Activated CD4-positive, alpha-beta memory T cell treated with anti-CD3 and anti-CD28 coated beads for 36 hours (primary cell): ENCODE measurements at regions of chr2 and their contacts with region 1.

Region 1: DNA sequence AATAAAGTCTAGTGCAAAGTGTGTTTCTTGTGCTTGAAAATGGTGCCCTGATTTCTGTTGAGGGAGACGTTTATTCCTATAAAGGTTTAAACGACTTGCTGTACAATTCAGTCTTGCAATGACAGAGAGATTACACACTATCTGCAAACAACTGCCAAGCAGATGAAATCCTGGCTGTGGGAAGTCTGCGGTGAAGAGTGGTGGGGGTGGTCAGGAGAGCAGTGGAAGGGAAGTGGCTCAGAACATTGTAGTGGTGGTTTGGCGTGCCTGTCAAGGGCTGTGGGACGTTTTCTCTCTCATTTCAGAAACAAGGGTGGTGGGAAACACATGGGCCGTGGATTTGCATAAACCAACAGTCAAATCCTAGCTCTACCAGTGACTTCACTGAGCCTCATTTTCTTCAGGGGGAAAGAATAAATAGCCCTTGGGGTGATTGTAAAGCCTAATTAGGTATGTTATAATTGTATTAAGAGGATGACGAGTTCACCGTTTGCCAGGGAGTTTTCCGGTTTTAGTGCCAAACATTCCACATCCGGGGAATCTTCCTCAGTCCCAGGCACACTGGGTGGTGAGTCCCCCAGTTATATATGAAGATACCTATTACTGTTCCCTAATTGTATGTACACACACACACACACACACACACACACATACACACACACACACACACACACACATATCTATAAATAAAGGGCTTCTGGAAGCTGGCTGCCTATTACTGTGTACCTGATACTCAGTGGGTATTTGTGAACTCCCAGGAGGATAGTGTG is 115.0 kb downstream of the SPTBN1 start:
- DNase-seq: peak; percentile 93
- H3K4me3 Mint-ChIP-seq: peak overlapping the region; percentile 36
- H3K27ac Mint-ChIP-seq: peak overlapping the region; percentile 96
- H3K4me1 Mint-ChIP-seq: peaks cover 85% of the 10 kb centered on the region
- H3K27me3 Mint-ChIP-seq: no peaks in the 10 kb centered on the region

Region 2: GRCh38 chr2:53786705-53787612 is 784.2 kb before region 1 on chr2 and contains the starts of genes ASB3 and ERLEC1:
- CTCF ChIA-PET with region 1: no interaction called
- POLR2A ChIA-PET with region 1: no interaction called
- intact Hi-C with region 1: loop called (anchors 10 kb)
- DNase-seq: peak; percentile 93
- H3K4me3 Mint-ChIP-seq: peak within 1 kb of the TSS; percentile 98
- H3K27ac Mint-ChIP-seq: peak within 1 kb of the TSS; percentile 94
- H3K4me1 Mint-ChIP-seq: peaks cover 46% of the 10 kb centered on the region
- H3K27me3 Mint-ChIP-seq: no peaks in the 10 kb centered on the region
- total RNA-seq, gene ASB3: 21.1 to 21.9 TPM
- total RNA-seq, gene ERLEC1: 26.7 to 27.0 TPM

Region 3: GRCh38 chr2:54589340-54590215 is 18.5 kb after region 1 on chr2:
- CTCF ChIA-PET with region 1: interaction called, 3 read pairs
- POLR2A ChIA-PET with region 1: interaction called, 7 read pairs
- intact Hi-C with region 1: loop called (anchors 1 kb)
- DNase-seq: peak; percentile 60
- H3K4me3 Mint-ChIP-seq: peak overlapping the region; percentile 48
- H3K27ac Mint-ChIP-seq: peak overlapping the region; percentile 94
- H3K4me1 Mint-ChIP-seq: peaks cover 87% of the 10 kb centered on the region
- H3K27me3 Mint-ChIP-seq: no peaks in the 10 kb centered on the region

Region 4: DNA sequence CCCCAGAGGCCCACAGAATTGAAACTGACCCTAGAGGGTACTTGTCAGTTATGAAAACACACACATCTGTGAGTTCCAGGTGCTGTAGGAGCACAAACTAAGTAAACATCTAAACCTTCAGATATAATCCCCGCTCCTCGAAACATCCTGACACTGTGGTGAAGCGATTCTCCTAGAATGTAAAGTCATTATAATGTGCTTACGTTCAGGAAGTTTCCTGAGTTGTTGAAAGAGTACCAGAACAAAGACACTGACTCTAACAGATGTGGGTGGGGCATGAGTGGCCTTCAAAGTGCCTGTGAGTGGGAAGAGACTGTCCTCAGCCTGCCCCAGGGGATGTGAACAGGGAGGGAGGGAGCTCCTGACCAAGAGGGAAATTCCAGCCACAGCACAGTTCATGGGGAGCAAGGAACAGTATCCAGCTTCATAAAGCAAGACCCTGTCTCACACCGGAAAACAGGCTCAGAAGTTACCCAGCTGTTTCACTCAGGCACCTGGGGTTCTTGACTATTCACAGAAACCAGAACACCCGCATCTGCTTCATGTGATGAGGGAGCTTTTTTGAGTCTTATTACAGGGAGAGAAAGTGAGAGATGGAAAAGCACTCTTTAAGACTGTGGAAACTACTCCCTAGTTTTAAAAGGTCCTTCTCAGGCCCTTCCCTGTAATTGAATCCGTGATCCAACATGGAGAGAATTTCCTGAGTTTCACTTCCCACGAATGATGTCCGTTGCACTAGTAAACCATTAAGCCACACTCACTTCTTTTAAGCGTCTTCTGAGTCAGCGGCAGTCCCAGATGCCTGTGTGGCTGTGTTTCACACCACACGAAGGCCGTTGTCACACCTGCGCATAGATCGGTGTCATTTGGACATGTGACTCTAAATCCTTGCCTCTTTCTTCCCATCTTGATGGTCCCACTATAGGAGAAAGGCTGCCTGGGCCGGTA is 63.7 kb after region 1 on chr2:
- CTCF ChIA-PET with region 1: interaction called, 5 read pairs
- POLR2A ChIA-PET with region 1: no interaction called
- intact Hi-C with region 1: loop called (anchors 2 kb)
- DNase-seq: no peak
- H3K4me3 Mint-ChIP-seq: peak overlapping the region; percentile 4
- H3K27ac Mint-ChIP-seq: peak overlapping the region; percentile 71
- H3K4me1 Mint-ChIP-seq: peaks cover 24% of the 10 kb centered on the region
- H3K27me3 Mint-ChIP-seq: no peaks in the 10 kb centered on the region

Region 5: GRCh38 chr2:54818226-54818625 is 247.1 kb after region 1 on chr2:
- CTCF ChIA-PET with region 1: no interaction called
- POLR2A ChIA-PET with region 1: no interaction called
- intact Hi-C with region 1: no loop called
- DNase-seq: no peak
- H3K4me3 Mint-ChIP-seq: no peak overlapping the region
- H3K27ac Mint-ChIP-seq: no peak overlapping the region
- H3K4me1 Mint-ChIP-seq: no peaks in the 10 kb centered on the region
- H3K27me3 Mint-ChIP-seq: no peaks in the 10 kb centered on the region

Region 6: GRCh38 chr2:55133467-55134315 is 562.6 kb after region 1 on chr2:
- CTCF ChIA-PET with region 1: no interaction called
- POLR2A ChIA-PET with region 1: no interaction called
- intact Hi-C with region 1: loop called (anchors 10 kb)
- DNase-seq: peak; percentile 63
- H3K4me3 Mint-ChIP-seq: peak overlapping the region; percentile 69
- H3K27ac Mint-ChIP-seq: peak overlapping the region; percentile 96
- H3K4me1 Mint-ChIP-seq: peaks cover 17% of the 10 kb centered on the region
- H3K27me3 Mint-ChIP-seq: no peaks in the 10 kb centered on the region

Region 7: DNA sequence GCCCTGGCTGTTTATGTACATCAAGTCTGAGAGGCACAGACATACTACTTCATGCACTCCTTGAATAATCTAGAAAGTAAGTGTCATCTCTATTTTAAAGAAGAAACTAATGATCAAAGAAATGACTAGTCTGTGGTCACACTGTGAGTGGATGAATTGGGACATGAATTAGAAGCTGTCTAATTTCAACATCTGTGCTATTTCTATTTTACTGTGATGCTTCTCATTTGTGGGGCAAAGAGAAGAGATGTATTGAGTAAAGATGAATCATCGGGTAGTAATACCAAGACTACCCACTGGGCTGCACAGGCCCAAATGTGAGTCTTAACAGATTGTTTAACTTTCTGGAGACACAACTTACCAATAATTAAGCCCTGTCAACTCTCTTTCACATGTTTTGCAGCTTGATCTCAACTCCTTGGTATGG is 740.3 kb after region 1 on chr2:
- CTCF ChIA-PET with region 1: no interaction called
- POLR2A ChIA-PET with region 1: no interaction called
- intact Hi-C with region 1: loop called (anchors 5 kb)
- DNase-seq: peak; percentile 65
- H3K4me3 Mint-ChIP-seq: no peak overlapping the region
- H3K27ac Mint-ChIP-seq: no peak overlapping the region
- H3K4me1 Mint-ChIP-seq: peaks cover 22% of the 10 kb centered on the region
- H3K27me3 Mint-ChIP-seq: no peaks in the 10 kb centered on the region